ENCODE measurements at regions of chr1 and their contacts with region 1.

Region 1: DNA sequence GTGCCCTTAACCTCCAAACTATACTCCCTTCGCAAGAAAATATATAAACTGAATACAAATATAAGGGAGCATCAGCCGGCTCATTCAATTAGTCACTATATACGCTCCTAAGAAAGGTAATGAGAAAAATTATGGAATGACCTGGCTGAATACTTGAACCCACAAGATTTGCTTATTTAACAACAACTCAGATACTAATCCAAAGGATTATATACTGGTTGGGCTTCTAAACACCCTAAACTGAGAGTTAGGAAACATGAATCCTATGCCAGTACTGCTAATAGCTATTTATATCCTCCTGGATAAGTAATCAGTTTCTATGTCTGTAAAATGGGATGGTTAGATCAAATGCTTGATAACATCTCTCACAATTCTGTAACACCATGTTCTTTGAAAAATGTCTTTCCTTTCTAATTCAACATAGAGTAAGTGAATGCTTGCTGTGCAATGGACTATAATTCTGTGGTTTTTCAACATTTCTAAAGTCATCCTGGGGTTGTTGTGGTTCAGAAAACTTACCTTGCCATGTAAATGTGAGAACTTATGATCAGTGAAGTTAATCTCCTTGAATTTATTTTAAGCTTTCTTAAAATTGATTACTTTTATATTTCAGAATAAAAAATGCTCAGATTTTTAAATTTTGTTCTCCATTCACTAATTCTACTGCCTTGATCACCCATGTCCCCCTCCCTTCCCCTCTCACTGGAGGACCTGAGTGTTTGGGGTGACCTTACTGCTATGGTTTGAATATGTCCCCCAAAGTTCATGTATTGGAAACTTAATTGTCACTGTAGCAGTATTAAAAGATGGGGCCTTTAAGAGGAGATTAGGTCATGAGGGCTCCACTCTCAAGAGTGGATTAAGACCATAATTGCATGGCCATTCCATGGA is 14.5 kb downstream of the DUSP10 start:
- DNase-seq: no peak
- ATAC-seq: no peak
- H3K4me3 ChIP-seq: no peak overlapping the region
- H3K27ac ChIP-seq: no peak overlapping the region
- H3K4me1 ChIP-seq: peaks cover 0 to 36% of the 10 kb centered on the region in 2 experiments; a peak in 4 of 5 replicates
- H3K27me3 ChIP-seq: no peaks in the 10 kb centered on the region
- CTCF ChIP-seq: no peak
- EP300 ChIP-seq: no peak
- POLR2A ChIP-seq: no peak
- RAD21 ChIP-seq: no peak; a peak in 1 of 4 replicates

Region 2: DNA sequence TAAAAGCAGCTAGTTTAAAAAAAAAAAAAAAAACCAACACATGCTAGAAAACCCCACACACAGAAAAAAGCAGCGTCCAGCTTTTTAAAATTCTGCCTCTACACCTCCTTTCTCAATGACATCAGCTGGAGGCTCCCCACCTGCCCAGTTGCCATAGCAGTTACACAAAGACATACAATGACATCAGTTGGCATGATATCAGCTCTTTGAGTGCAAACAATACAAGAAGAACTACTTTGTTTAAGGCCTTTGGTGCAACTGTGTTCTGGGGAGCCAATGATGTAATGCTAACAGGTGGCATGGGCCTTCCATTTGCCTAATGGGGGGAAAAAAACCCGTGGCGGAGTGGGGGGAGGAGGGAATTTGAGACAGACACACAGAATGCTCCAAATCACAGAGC is 18.4 kb before region 1 on chr1:
- CTCF ChIA-PET with region 1: no interaction called
- POLR2A ChIA-PET with region 1: interaction called, 5 read pairs
- in situ Hi-C with region 1: no loop called
- intact Hi-C with region 1: loop called (anchors 1 kb)
- DNase-seq: no peak
- ATAC-seq: no peak
- H3K4me3 ChIP-seq: no peak overlapping the region
- H3K27ac ChIP-seq: peak overlapping the region; percentile 86; the same call in 2 of the 3 replicates
- H3K4me1 ChIP-seq: peaks cover 10 to 68% of the 10 kb centered on the region in 2 experiments
- H3K27me3 ChIP-seq: no peaks in the 10 kb centered on the region
- CTCF ChIP-seq: no peak
- EP300 ChIP-seq: no peak
- POLR2A ChIP-seq: no peak
- RAD21 ChIP-seq: no peak

Measured in K562 (cell line).